Caco-2 (cell line): ENCODE measurements at regions of chr6 and their contacts with region 1.

Region 1: GRCh38 chr6:33288921-33289748 is at the starts of genes PFDN6 and WDR46:
- DNase-seq: peak; percentile 79 to 83
- H3K4me3 ChIP-seq: peak within 1 kb of the TSS; percentile 65
- H3K4me3 Mint-ChIP-seq: peak within 1 kb of the TSS; percentile 87
- H3K27ac Mint-ChIP-seq: peak within 1 kb of the TSS; percentile 94
- H3K4me1 ChIP-seq: peaks cover 7% of the 10 kb centered on the region; the same call in 1 of the 2 replicates
- H3K4me1 Mint-ChIP-seq: peaks cover 13% of the 10 kb centered on the region
- H3K27me3 ChIP-seq: no peaks in the 10 kb centered on the region
- H3K27me3 Mint-ChIP-seq: no peaks in the 10 kb centered on the region
- CTCF ChIP-seq: no peak
- total RNA-seq, gene PFDN6: 65.9 and 81.8 TPM in 2 replicates
- total RNA-seq, gene WDR46: 58.2 and 62.2 TPM in 2 replicates

Region 2: DNA sequence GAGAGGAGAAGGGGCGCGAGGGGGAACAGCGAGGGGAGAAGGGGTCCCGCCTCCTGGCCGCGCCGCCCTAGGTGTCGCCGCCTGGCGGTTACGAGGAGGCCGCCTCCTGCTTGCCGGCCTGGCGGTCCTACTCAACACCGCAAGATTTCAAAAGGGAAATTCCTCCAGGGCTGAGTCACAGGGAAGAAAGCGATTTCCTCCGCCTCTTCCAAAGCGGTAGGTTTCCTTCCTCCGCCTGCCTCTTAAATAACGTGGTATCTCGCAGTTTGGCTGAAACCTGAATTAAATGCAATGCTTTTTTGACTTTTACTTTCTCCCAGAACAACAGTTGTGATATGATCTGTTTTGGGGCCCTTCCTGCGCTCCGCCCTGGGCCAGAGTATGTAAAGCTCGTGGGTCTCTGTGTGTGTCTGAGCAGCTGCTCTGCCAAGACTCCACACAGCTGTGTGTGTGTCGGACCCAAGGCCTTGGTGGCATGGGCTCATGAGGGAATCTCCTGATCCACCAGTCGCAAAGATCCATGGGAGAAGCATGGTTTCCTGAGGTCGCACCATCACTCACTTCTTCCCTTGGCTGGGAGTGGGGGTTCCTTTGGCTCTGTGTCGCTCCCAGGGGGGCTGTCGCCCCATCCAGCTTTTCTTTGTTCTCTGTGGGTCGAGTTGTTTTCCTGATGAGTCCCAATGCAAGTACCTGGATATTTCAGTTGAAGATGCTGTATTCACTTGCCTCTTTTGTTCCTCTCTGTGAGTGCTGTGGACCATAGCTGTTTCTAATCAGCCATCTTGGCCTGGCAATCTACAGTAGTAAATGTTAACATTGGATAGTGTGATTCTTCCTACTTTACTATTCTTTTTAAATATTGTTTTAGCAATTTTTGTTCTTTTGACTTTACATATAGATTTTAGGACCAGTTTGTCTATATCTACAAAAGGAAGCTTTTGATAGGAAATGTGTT is 1033.7 kb before region 1 on chr6:
- CTCF ChIA-PET with region 1: no interaction called
- POLR2A ChIA-PET with region 1: no interaction called
- intact Hi-C with region 1: no loop called
- DNase-seq: no peak
- H3K4me3 ChIP-seq: no peak overlapping the region
- H3K4me3 Mint-ChIP-seq: peak overlapping the region; percentile 31
- H3K27ac Mint-ChIP-seq: no peak overlapping the region
- H3K4me1 ChIP-seq: no peaks in the 10 kb centered on the region
- H3K4me1 Mint-ChIP-seq: no peaks in the 10 kb centered on the region
- H3K27me3 ChIP-seq: no peaks in the 10 kb centered on the region
- H3K27me3 Mint-ChIP-seq: no peaks in the 10 kb centered on the region
- CTCF ChIP-seq: no peak

Region 3: GRCh38 chr6:33118525-33119123 is 170.5 kb before region 1 on chr6:
- CTCF ChIA-PET with region 1: no interaction called
- POLR2A ChIA-PET with region 1: no interaction called
- intact Hi-C with region 1: no loop called
- DNase-seq: peak in 1 of 2 experiments; percentile 54
- H3K4me3 ChIP-seq: no peak overlapping the region
- H3K4me3 Mint-ChIP-seq: no peak overlapping the region
- H3K27ac Mint-ChIP-seq: no peak overlapping the region
- H3K4me1 ChIP-seq: peaks cover 6% of the 10 kb centered on the region; the same call in 1 of the 2 replicates
- H3K4me1 Mint-ChIP-seq: peaks cover 12% of the 10 kb centered on the region
- H3K27me3 ChIP-seq: peaks cover 1% of the 10 kb centered on the region
- H3K27me3 Mint-ChIP-seq: peaks cover 19% of the 10 kb centered on the region
- CTCF ChIP-seq: peak; percentile 60 to 73

Region 4: DNA sequence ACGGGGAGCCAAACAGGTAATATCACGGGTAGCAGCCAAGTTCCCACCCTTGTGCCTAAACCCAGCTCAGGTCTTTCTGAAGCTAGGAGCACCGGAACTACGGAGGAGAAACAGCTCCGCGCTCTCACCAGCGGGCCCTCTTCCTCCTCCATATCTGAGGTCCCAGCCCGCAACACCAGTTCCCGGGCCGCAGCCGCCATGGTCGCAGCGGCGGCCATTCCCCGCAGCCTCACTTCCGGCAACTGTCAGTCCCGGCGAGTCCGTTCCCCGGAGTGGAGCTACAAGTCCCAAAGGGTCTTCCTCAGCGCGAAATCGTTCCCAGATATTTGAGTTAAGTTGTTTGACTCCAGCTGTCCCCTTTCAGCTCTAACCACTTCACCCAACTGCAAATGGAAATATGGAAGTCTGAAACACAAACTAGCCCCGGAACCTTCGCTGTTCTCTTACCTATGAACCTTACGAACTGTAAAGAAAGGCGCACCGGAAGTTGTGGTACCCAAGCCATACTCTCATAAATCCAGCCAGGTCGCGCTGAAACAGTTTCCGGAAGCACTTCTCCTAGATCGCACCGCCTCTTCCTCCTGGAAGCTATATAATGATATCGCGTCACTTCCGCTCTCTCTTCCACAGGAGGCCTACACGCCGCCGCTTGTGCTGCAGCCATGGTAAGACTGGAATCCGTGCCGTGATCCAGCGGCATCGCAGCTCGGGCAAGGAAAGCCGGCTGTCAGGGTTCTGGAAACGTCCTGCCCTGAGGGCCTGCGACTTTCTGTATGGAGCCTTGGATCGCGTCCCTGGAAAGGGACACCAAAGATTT is 17.5 kb before region 1 on chr6 and contains the starts of genes RPS18 and VPS52:
- CTCF ChIA-PET with region 1: interaction called, 8 read pairs
- POLR2A ChIA-PET with region 1: interaction called, 17 read pairs
- intact Hi-C with region 1: no loop called
- DNase-seq: peak; percentile 93 to 97
- H3K4me3 ChIP-seq: peak within 1 kb of the TSS; percentile 56
- H3K4me3 Mint-ChIP-seq: peak within 1 kb of the TSS; percentile 95
- H3K27ac Mint-ChIP-seq: peak within 1 kb of the TSS; percentile 100
- H3K4me1 ChIP-seq: peaks cover 18% of the 10 kb centered on the region
- H3K4me1 Mint-ChIP-seq: peaks cover 24% of the 10 kb centered on the region
- H3K27me3 ChIP-seq: no peaks in the 10 kb centered on the region
- H3K27me3 Mint-ChIP-seq: no peaks in the 10 kb centered on the region
- CTCF ChIP-seq: no peak
- total RNA-seq, gene RPS18: 2,340 and 2,366 TPM in 2 replicates
- total RNA-seq, gene VPS52: 55.1 and 55.6 TPM in 2 replicates

Region 5: GRCh38 chr6:33276864-33277662 is 12.1 kb before region 1 on chr6 and contains the start of gene B3GALT4:
- CTCF ChIA-PET with region 1: interaction called, 8 read pairs
- POLR2A ChIA-PET with region 1: interaction called, 17 read pairs
- intact Hi-C with region 1: no loop called
- DNase-seq: peak in 1 of 2 experiments; percentile 55
- H3K4me3 ChIP-seq: no peak within 1 kb of the TSS
- H3K4me3 Mint-ChIP-seq: peak within 1 kb of the TSS; percentile 56
- H3K27ac Mint-ChIP-seq: peak within 1 kb of the TSS; percentile 18
- H3K4me1 ChIP-seq: peaks cover 18% of the 10 kb centered on the region
- H3K4me1 Mint-ChIP-seq: peaks cover 18% of the 10 kb centered on the region
- H3K27me3 ChIP-seq: no peaks in the 10 kb centered on the region
- H3K27me3 Mint-ChIP-seq: no peaks in the 10 kb centered on the region
- CTCF ChIP-seq: peak; percentile 10 to 44
- total RNA-seq, gene B3GALT4: 0.34 and 0.67 TPM in 2 replicates